ENCODE measurements at regions of chr17 and their contacts with region 1.

Region 1: GRCh38 chr17:8868529-8868951 is 1.1 kb upstream of the PIK3R6 start:
- DNase-seq: no peak
- H3K4me3 Mint-ChIP-seq: peak overlapping the region; percentile 90
- H3K27ac Mint-ChIP-seq: peak overlapping the region; percentile 19
- H3K4me1 Mint-ChIP-seq: peaks cover 42% of the 10 kb centered on the region
- H3K27me3 Mint-ChIP-seq: no peaks in the 10 kb centered on the region

Region 2: GRCh38 chr17:8857919-8858318 is 10.6 kb before region 1 on chr17:
- intact Hi-C with region 1: loop called (anchors 1 kb)
- DNase-seq: peak; percentile 55
- H3K4me3 Mint-ChIP-seq: peak overlapping the region; percentile 75
- H3K27ac Mint-ChIP-seq: peak overlapping the region; percentile 95
- H3K4me1 Mint-ChIP-seq: peaks cover 58% of the 10 kb centered on the region
- H3K27me3 Mint-ChIP-seq: no peaks in the 10 kb centered on the region

Region 3: GRCh38 chr17:9037736-9038135 is 169.2 kb after region 1 on chr17:
- intact Hi-C with region 1: no loop called
- DNase-seq: no peak
- H3K4me3 Mint-ChIP-seq: no peak overlapping the region
- H3K27ac Mint-ChIP-seq: no peak overlapping the region
- H3K4me1 Mint-ChIP-seq: no peaks in the 10 kb centered on the region
- H3K27me3 Mint-ChIP-seq: peaks cover 18% of the 10 kb centered on the region

Measured in activated T-helper 2 cell treated with anti-CD3 and anti-CD28 coated beads, Interferon-gamma antibody, Interleukin-2, Interleukin-4, amounts not matched to agents 10 μg/mL and 5 μg/mL and 100 μg/mL, durations not matched to agents 14 hours and 24 hours and 36 hours (primary cell).